Caco-2 (cell line): ENCODE measurements at regions of chr3 and their contacts with region 1.

Region 1: DNA sequence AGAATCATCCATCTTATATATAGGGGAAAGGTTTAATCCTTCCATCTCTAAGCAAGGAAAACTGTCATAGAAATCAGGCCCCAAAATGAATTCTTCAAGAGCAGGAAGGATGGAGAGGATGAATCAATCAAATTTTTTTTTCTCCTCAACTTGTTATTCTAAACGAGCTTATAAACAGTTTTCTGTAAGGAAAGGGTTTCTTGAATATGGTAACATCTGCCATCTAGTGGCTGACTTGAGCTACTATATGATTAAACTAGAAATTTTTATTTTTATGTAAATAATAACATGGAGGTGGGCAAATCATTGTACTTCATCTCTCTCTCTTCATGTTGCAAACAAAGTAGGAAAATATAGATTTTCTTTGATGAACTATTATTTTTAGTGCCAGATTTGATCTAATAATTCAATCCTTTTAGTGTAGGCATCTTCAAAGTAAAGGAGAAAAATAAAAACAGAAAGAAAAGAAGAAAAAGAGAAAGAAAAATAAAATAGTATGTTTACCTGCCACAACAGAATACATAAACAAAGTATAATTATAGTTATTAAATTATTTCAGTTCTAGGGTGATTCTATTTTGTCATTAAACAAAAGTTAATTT is 146.6 kb downstream of the SERPINI1 start:
- DNase-seq: peak in 1 of 2 experiments; percentile 11
- H3K4me3 ChIP-seq: no peak overlapping the region
- H3K4me3 Mint-ChIP-seq: no peak overlapping the region
- H3K27ac Mint-ChIP-seq: no peak overlapping the region
- H3K4me1 ChIP-seq: no peaks in the 10 kb centered on the region
- H3K4me1 Mint-ChIP-seq: no peaks in the 10 kb centered on the region
- H3K27me3 ChIP-seq: no peaks in the 10 kb centered on the region
- H3K27me3 Mint-ChIP-seq: peaks cover 7% of the 10 kb centered on the region
- CTCF ChIP-seq: peak; percentile 38 to 41

Region 2: DNA sequence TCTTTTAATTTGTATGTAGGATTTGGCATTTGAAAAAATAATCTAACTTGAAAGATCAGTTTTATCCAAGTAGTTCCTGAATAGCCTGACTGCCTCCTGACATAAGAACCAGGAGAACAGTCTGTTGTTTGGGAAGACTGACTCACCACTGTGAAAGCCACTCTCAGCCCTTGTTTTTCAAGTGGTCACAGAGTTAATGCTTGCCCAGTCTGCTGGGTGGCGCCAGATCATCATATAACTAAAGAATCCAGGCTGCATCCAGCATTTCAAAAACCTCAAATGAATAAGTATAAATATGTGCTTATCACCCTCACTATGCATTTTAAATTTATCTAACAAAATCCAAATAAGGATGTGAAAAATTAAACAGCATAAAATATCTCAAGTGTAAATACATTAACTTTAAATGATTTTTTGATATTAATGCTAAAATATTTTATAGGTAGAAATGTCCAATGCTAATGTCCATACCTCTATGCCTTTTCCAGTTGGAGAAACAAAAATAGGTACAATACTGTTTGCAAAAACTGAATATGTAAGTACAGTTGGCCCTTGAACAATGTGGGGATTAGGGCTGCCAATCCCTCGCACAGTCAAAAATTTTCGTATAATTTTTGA is 475.2 kb before region 1 on chr3:
- CTCF ChIA-PET with region 1: no interaction called
- POLR2A ChIA-PET with region 1: no interaction called
- intact Hi-C with region 1: loop called (anchors 1 kb)
- DNase-seq: peak; percentile 42 to 43
- H3K4me3 ChIP-seq: no peak overlapping the region
- H3K4me3 Mint-ChIP-seq: no peak overlapping the region
- H3K27ac Mint-ChIP-seq: no peak overlapping the region
- H3K4me1 ChIP-seq: no peaks in the 10 kb centered on the region
- H3K4me1 Mint-ChIP-seq: peaks cover 5% of the 10 kb centered on the region
- H3K27me3 ChIP-seq: no peaks in the 10 kb centered on the region
- H3K27me3 Mint-ChIP-seq: no peaks in the 10 kb centered on the region
- CTCF ChIP-seq: peak; percentile 35 to 74

Region 3: GRCh38 chr3:167734498-167735232 is 147.5 kb before region 1 on chr3 and contains the start of gene PDCD10:
- CTCF ChIA-PET with region 1: interaction called, 7 read pairs
- POLR2A ChIA-PET with region 1: no interaction called
- intact Hi-C with region 1: loop called (anchors 2 kb)
- DNase-seq: peak; percentile 97 to 98
- H3K4me3 ChIP-seq: peak within 1 kb of the TSS; percentile 84
- H3K4me3 Mint-ChIP-seq: no peak within 1 kb of the TSS
- H3K27ac Mint-ChIP-seq: no peak within 1 kb of the TSS
- H3K4me1 ChIP-seq: 0 out of 2 replicates have a peak, but pooled peaks cover 6% of the 10 kb centered on the region
- H3K4me1 Mint-ChIP-seq: peaks cover 20% of the 10 kb centered on the region
- H3K27me3 ChIP-seq: no peaks in the 10 kb centered on the region
- H3K27me3 Mint-ChIP-seq: no peaks in the 10 kb centered on the region
- CTCF ChIP-seq: no peak
- total RNA-seq, gene PDCD10: 65.7 and 65.8 TPM in 2 replicates

Region 4: DNA sequence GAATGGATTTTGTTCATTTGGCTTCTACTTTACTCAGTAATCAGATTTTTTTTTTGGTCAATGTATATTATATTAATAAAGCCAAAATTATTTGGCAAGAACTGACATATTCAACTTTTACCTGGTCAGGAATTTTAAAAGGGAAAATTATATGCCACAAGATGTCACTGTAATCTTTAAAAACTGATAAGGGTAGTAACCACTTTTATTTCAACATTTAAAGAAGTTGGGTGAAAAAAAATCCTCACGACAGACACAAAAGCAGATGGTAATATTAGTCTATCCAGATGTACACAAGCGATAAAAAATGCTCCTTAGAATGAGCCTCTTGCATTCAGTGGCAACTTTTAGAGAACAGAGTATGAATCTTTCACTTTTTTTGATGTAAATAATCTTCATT is 44.7 kb before region 1 on chr3:
- CTCF ChIA-PET with region 1: interaction called, 3 read pairs
- POLR2A ChIA-PET with region 1: no interaction called
- intact Hi-C with region 1: loop called (anchors 1 kb)
- DNase-seq: no peak
- H3K4me3 ChIP-seq: no peak overlapping the region
- H3K4me3 Mint-ChIP-seq: no peak overlapping the region
- H3K27ac Mint-ChIP-seq: no peak overlapping the region
- H3K4me1 ChIP-seq: no peaks in the 10 kb centered on the region
- H3K4me1 Mint-ChIP-seq: no peaks in the 10 kb centered on the region
- H3K27me3 ChIP-seq: no peaks in the 10 kb centered on the region
- H3K27me3 Mint-ChIP-seq: no peaks in the 10 kb centered on the region
- CTCF ChIP-seq: no peak